K562 (cell line): ENCODE measurements at regions of chr3 and their contacts with region 1.

Region 1: GRCh38 chr3:125585595-125586223 is 9.6 kb downstream of the OSBPL11 start:
- DNase-seq: peak; percentile 40 to 69 (median 57)
- ATAC-seq: peak; percentile 78
- H3K4me3 ChIP-seq: no peak overlapping the region
- H3K27ac ChIP-seq: no peak overlapping the region
- H3K4me1 ChIP-seq: no peaks in the 10 kb centered on the region
- H3K27me3 ChIP-seq: no peaks in the 10 kb centered on the region
- CTCF ChIP-seq: peak; percentile 70 to 83 (median 79)
- EP300 ChIP-seq: no peak
- POLR2A ChIP-seq: no peak
- RAD21 ChIP-seq: peak; percentile 70 to 85

Region 2: DNA sequence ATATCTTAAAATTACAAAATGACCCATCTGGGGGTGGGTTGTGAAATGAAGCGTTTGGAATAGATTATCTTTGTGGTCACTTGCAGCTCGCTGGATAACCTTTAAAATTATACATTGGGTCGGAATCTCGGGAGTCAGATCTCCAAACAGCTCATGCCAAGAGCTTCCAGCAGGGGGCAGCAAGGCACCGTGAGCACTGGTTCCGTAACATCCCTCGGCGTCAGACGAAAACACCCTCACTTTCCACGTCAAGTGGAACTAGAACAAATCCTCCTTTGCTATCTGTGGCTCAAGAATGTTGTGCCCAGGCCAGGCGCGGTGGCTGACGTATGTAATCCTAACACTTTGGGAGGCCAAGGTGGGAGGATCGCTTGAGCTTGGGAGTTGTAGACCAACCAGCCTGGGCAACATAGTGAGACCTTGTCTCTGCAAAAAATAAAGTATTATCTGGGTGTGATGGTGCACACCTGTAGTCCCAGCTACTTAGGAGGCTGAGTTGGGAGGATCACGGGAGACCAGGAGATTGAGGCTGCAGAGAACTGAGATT is 824.4 kb before region 1 on chr3:
- CTCF ChIA-PET with region 1: interaction called, 5 read pairs
- POLR2A ChIA-PET with region 1: no interaction called
- in situ Hi-C with region 1: loop called (anchors 10 kb)
- intact Hi-C with region 1: loop called (anchors 2 kb)
- DNase-seq: peak; percentile 62 to 77 (median 66)
- ATAC-seq: peak; percentile 91
- H3K4me3 ChIP-seq: no peak overlapping the region
- H3K27ac ChIP-seq: no peak overlapping the region
- H3K4me1 ChIP-seq: no peaks in the 10 kb centered on the region; a peak in 1 of 5 replicates
- H3K27me3 ChIP-seq: no peaks in the 10 kb centered on the region
- CTCF ChIP-seq: peak; percentile 83 to 88 (median 86)
- EP300 ChIP-seq: no peak
- POLR2A ChIP-seq: no peak
- RAD21 ChIP-seq: peak; percentile 81 to 89

Region 3: DNA sequence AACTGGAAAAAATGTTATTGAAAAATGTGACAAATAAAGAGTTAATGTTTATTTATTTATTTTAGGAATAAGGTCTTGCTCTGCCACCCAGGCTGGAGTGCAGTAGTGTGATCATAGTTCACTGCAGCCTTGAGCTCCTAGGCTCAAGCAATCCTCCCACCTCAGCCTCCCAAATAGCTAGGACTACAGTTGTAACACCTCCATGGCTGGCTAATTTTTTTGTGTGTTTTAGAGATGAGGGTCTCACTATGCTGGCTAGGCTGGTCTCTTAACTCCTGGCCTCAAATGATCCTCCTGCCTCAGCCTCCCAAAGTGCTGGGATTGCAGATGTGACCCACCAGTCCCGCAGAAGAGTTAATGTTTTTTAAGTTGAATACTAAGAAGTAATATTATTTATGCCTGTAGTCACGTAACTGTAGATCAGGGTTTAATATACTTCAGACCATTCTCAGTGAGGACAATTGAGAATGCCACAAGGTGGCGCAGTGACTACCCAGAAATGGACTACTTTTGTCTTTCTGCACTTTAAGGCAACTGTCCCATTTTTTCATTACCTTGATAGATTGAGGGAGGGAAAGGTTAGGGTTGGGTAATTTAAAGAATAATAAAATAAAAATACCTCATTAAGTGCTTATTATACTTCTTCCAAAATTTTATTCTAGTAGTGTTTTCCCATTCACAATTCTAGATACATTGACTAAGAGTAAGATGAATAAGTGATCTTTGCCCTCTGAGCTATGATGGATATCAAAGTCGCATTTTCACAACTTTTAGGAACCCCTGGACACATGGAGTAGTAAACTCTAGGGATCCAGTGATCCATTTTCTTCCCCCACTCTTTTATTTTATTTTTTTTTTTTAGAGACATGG is 657.1 kb before region 1 on chr3:
- CTCF ChIA-PET with region 1: interaction called, 6 read pairs
- POLR2A ChIA-PET with region 1: no interaction called
- in situ Hi-C with region 1: loop called (anchors 10 kb)
- intact Hi-C with region 1: loop called (anchors 2 kb)
- DNase-seq: peak; percentile 12 to 63 (median 16)
- ATAC-seq: peak; percentile 78
- H3K4me3 ChIP-seq: no peak overlapping the region
- H3K27ac ChIP-seq: no peak overlapping the region
- H3K4me1 ChIP-seq: no peaks in the 10 kb centered on the region
- H3K27me3 ChIP-seq: no peaks in the 10 kb centered on the region
- CTCF ChIP-seq: peak; percentile 42 to 68 (median 56); a peak in 5 of 6 replicates
- EP300 ChIP-seq: no peak
- POLR2A ChIP-seq: no peak
- RAD21 ChIP-seq: peak; percentile 51 to 75

Region 4: DNA sequence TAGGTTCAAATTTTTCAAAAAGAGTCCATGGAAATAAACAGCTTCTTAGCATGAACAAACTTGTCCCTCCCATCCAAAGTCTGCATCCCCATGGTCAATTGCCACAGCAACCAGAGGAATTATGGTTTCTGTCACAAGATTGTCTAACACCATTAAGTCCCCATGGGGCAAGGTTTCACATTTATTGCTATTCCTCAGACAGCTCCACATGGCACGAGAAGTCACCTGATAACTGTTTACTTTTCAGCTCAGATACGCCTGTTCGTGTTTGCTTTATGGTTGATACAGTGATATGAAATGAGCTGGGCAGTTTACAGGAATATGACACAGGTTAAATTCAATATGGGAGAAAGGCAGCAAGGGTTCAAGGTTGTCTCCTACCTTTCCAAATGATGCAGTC is 613.2 kb before region 1 on chr3:
- CTCF ChIA-PET with region 1: no interaction called
- POLR2A ChIA-PET with region 1: no interaction called
- in situ Hi-C with region 1: no loop called
- intact Hi-C with region 1: no loop called
- DNase-seq: no peak
- ATAC-seq: no peak
- H3K4me3 ChIP-seq: no peak overlapping the region
- H3K27ac ChIP-seq: no peak overlapping the region
- H3K4me1 ChIP-seq: no peaks in the 10 kb centered on the region
- H3K27me3 ChIP-seq: peaks cover 9 to 30% of the 10 kb centered on the region in 2 experiments; a peak in 3 of 5 replicates
- CTCF ChIP-seq: no peak
- EP300 ChIP-seq: no peak
- POLR2A ChIP-seq: no peak
- RAD21 ChIP-seq: no peak

Region 5: DNA sequence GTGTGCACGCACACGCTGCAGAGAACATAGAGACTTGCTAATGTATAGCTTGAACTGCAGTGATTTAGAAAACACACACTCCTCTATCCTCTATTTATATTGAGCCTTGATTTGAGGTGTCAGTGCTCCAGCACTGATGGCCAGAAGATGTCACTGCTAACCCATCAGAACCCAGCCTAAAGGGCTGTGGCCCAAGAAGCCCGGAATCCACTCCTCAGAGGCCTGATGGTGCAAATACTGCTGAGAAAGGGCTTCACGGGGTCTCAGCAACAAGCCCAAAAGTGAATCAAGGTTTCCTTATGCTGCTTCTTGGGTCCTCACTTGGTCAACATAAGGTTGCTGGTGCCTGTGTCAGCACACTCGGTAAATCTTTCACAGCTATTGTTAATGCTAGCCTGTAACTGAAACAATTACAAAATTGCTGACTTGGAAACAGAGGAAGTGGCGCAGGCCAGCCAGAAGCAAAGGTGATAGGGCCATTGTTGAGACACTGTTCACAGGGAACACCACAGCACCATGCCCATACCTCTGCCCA is 590.2 kb before region 1 on chr3:
- CTCF ChIA-PET with region 1: interaction called, 13 read pairs
- POLR2A ChIA-PET with region 1: no interaction called
- in situ Hi-C with region 1: no loop called
- intact Hi-C with region 1: loop called (anchors 1 kb)
- DNase-seq: peak; percentile 8 to 47 (median 28)
- ATAC-seq: peak; percentile 86
- H3K4me3 ChIP-seq: no peak overlapping the region
- H3K27ac ChIP-seq: no peak overlapping the region
- H3K4me1 ChIP-seq: no peaks in the 10 kb centered on the region; a peak in 1 of 5 replicates
- H3K27me3 ChIP-seq: peaks cover 18 to 51% of the 10 kb centered on the region in 2 experiments; a peak in 4 of 5 replicates
- CTCF ChIP-seq: peak; percentile 47 to 73 (median 57)
- EP300 ChIP-seq: no peak
- POLR2A ChIP-seq: no peak
- RAD21 ChIP-seq: peak; percentile 75 to 82

Region 6: GRCh38 chr3:125137352-125138033 is 448.2 kb before region 1 on chr3:
- CTCF ChIA-PET with region 1: no interaction called
- POLR2A ChIA-PET with region 1: no interaction called
- in situ Hi-C with region 1: no loop called
- intact Hi-C with region 1: no loop called
- DNase-seq: no peak
- ATAC-seq: no peak
- H3K4me3 ChIP-seq: no peak overlapping the region
- H3K27ac ChIP-seq: no peak overlapping the region
- H3K4me1 ChIP-seq: peaks cover 0 to 6% of the 10 kb centered on the region in 2 experiments; a peak in 1 of 5 replicates
- H3K27me3 ChIP-seq: peaks cover 11 to 41% of the 10 kb centered on the region in 2 experiments; a peak in 4 of 5 replicates
- CTCF ChIP-seq: no peak
- EP300 ChIP-seq: no peak
- POLR2A ChIP-seq: no peak
- RAD21 ChIP-seq: no peak

Region 7: GRCh38 chr3:125150525-125151441 is 434.9 kb before region 1 on chr3:
- CTCF ChIA-PET with region 1: interaction called, 4 read pairs
- POLR2A ChIA-PET with region 1: no interaction called
- in situ Hi-C with region 1: loop called (anchors 25 kb)
- intact Hi-C with region 1: loop called (anchors 5 kb)
- DNase-seq: peak; percentile 46 to 71 (median 66)
- ATAC-seq: peak; percentile 82
- H3K4me3 ChIP-seq: no peak overlapping the region
- H3K27ac ChIP-seq: no peak overlapping the region
- H3K4me1 ChIP-seq: peaks cover 7 to 10% of the 10 kb centered on the region in 2 experiments; a peak in 3 of 5 replicates
- H3K27me3 ChIP-seq: peaks cover 0 to 9% of the 10 kb centered on the region in 2 experiments; a peak in 1 of 5 replicates
- CTCF ChIP-seq: peak; percentile 70
- EP300 ChIP-seq: no peak
- POLR2A ChIP-seq: no peak
- RAD21 ChIP-seq: peak in 1 of 2 experiments; percentile 67; a peak in 3 of 4 replicates

Region 8: DNA sequence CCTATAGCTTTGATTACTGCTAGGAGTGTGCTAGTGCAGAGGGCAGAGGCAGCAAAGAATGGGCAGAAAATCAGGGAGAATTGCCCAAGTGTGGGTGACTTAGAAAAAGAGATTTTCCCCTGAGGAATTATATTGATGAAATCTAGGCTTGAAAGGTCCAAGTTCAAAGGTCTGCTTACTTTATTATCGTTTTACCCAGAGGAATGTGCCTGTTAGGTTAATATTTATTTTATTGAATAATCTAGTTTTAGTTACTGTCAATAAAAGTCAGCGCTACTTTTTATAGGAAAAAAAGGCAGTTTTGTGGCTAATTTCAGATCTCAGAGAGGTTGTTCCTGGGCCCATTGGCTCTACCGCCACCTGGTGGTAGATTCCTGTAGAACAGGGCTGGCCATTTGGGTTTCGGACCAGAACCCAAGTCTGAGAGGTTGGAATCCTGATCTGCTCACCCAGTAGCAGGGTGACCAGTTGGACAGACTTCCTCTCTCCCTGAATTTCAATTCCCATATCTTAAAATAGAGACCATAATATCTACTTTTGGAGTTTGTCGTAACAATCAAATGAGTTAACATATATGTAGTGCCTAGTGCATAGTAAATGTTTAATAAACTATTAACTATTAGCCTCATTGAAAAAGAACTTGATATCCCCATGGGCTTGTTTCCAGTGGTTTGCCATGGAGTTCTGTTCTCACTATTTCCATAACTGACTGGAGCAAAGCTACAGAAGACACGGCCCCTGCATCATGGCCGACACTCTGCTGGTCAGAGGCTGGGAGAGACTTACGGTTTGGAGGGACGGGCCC is 147.9 kb before region 1 on chr3:
- CTCF ChIA-PET with region 1: no interaction called
- POLR2A ChIA-PET with region 1: no interaction called
- in situ Hi-C with region 1: no loop called
- intact Hi-C with region 1: loop called (anchors 10 kb)
- DNase-seq: peak; percentile 42 to 71 (median 53)
- ATAC-seq: 0 out of 3 replicates have a peak, but pooled peaks have one; percentile 11
- H3K4me3 ChIP-seq: no peak overlapping the region
- H3K27ac ChIP-seq: no peak overlapping the region
- H3K4me1 ChIP-seq: peaks cover 37 to 42% of the 10 kb centered on the region in 2 experiments; a peak in 4 of 5 replicates
- H3K27me3 ChIP-seq: no peaks in the 10 kb centered on the region
- CTCF ChIP-seq: peak; percentile 73 to 86 (median 73)
- EP300 ChIP-seq: no peak
- POLR2A ChIP-seq: no peak
- RAD21 ChIP-seq: peak; percentile 63 to 78

Region 9: GRCh38 chr3:125608419-125608818 is 22.7 kb after region 1 on chr3:
- CTCF ChIA-PET with region 1: no interaction called
- POLR2A ChIA-PET with region 1: no interaction called
- in situ Hi-C with region 1: no loop called
- intact Hi-C with region 1: no loop called
- DNase-seq: no peak
- ATAC-seq: no peak
- H3K4me3 ChIP-seq: no peak overlapping the region
- H3K27ac ChIP-seq: no peak overlapping the region
- H3K4me1 ChIP-seq: no peaks in the 10 kb centered on the region
- H3K27me3 ChIP-seq: no peaks in the 10 kb centered on the region; a peak in 1 of 5 replicates
- CTCF ChIP-seq: no peak
- EP300 ChIP-seq: no peak
- POLR2A ChIP-seq: no peak
- RAD21 ChIP-seq: no peak